Right ventricle myocardium inferior (tissue), 1 donor: ENCODE measurements at regions of chr12 and their contacts with region 1.

Region 1: DNA sequence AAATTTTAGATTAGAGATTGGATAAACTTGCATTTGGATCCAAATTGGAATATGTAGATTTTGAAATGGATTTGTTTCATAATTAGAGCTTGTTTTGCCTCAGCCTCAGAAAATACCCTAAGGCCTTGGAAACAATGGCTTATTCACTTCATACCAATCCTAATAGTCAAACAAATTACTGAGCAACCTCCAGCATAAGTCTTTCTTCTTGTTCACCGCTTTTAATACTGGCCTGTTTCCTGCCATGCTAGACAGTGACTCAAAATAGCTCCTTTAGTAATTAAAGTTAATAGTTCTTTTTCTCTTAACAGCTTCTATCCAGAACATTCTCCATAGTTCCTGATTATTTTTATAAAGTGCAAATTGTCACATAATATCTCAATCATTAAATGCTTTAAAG is 110.9 kb upstream of the DNM1L start:
- DNase-seq: no peak
- ATAC-seq: peak; percentile 64

Region 2: GRCh38 chr12:31849090-31849687 is 719.1 kb before region 1 on chr12:
- intact Hi-C with region 1: no loop called
- DNase-seq: no peak
- ATAC-seq: no peak

Region 3: DNA sequence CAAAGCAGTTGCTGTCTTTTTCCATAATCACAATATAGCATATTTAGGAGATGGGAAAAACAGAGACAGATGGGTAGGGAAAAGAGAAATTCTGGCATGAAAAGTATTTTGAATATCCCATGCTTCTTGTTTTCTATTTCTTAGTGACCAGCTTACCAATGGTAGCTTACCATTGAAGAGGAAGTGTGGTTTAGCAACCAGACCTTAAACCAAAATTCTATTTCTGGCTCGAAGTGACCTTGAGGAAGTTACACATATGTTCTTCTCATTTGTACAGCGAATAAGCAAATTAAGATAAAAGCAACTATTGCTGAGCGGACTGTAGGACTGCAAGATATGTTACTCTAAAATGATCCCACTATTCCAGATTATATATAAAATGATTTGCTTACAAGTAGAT is 86.0 kb before region 1 on chr12:
- intact Hi-C with region 1: loop called (anchors 5 kb)
- DNase-seq: no peak
- ATAC-seq: peak; percentile 53

Region 4: DNA sequence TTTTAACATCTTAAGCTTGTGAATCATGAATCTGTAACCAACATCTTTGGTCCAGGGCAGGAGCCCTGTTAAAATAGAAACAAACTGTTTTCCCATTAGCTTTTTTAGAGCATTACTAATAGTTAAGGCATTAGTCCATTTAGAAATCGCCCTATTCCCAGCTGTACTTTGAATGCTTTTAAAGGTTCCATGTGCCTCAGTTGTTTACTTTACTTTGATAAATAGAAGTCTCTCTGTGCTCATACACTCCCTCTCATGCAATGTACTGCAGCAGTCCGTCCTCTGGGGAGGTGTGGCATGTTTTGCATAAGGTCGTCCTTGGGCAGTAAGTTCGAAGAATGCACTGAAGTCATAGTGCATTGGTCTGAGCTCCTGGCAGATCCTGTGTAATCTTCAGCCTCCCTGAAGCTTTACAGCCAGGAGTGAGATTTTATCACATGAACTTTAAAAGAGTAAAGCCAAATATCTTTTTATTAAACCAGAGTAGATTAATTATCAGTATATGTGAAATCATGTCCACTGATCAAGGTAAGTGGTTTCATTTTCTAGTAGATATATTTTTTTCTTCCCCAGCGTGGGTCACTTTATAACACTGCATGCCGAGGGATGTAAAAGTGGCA is 34.2 kb before region 1 on chr12:
- intact Hi-C with region 1: loop called (anchors 5 kb)
- DNase-seq: no peak
- ATAC-seq: peak; percentile 84